Activated B cell treated with CpG ODN at 0.5 μM for 24 hours (primary cell): ENCODE measurements at regions of chr1 and their contacts with region 1.

Region 1: DNA sequence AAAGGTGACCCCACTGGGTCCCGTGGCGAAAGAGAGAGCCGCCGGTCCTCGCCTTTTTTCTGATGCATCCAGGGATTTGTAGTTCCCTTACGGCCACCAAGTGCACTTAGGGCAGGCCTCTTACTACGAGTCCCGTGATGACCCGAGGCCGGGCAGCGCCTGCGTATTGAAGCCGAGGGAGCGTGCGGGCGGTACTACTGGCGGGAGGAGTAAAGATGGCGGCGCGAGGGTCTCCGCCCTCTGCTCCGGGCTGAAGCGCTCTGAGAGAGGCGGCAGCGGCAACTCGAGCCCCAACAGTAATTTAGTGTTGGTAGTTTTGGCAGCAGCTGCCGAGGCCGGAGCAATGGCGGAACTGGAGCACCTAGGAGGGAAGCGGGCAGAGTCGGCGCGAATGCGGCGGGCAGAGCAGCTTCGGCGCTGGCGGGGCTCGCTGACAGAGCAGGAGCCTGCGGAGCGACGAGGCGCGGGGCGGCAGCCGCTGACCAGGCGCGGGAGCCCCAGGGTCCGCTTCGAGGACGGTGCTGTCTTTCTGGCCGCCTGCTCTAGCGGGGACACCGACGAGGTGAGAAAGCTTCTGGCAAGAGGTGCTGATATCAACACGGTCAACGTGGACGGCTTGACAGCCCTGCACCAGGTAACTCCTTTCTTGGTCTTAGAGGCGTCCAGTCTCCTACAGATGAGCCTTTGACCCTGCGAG is at the start of gene PPP1R12B:
- DNase-seq: peak; percentile 90
- ATAC-seq: peak; percentile 95
- H3K4me3 Mint-ChIP-seq: peak within 1 kb of the TSS; percentile 99
- H3K27ac Mint-ChIP-seq: peak within 1 kb of the TSS; percentile 93
- H3K4me1 Mint-ChIP-seq: peaks cover 25% of the 10 kb centered on the region
- H3K27me3 Mint-ChIP-seq: no peaks in the 10 kb centered on the region
- CTCF ChIP-seq: no peak
- total RNA-seq, gene PPP1R12B: 22.4 and 25.7 TPM in 2 replicates

Region 2: DNA sequence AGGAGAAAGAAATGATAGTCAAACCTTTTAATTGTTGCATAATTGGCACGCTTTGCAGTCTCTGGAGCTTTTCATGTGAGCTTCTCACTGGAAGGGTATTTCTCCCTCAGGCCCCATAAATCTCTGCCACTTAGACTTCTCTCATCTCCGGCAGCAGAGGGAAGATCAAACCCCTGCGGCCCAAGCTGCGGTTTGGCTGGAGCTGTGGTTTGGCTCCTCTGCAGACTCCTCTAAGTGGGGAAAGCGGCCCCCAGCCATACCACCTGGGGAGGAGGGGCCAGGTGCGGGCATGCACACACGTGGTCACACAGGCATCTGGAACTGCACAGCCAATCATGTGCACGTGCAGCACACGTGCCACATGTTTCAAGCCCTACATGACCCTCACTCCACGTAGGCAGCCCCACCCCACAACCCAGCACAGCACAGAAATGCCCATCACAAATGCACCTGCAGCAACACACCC is 65.2 kb before region 1 on chr1:
- CTCF ChIA-PET with region 1: no interaction called
- POLR2A ChIA-PET with region 1: no interaction called
- intact Hi-C with region 1: no loop called
- DNase-seq: no peak
- ATAC-seq: no peak
- H3K4me3 Mint-ChIP-seq: no peak overlapping the region
- H3K27ac Mint-ChIP-seq: no peak overlapping the region
- H3K4me1 Mint-ChIP-seq: no peaks in the 10 kb centered on the region
- H3K27me3 Mint-ChIP-seq: peaks cover 18% of the 10 kb centered on the region
- CTCF ChIP-seq: no peak

Region 3: GRCh38 chr1:202615501-202616354 is 267.1 kb after region 1 on chr1:
- CTCF ChIA-PET with region 1: no interaction called
- POLR2A ChIA-PET with region 1: no interaction called
- intact Hi-C with region 1: loop called (anchors 2 kb)
- DNase-seq: no peak
- ATAC-seq: peak; percentile 82
- H3K4me3 Mint-ChIP-seq: peak overlapping the region; percentile 77
- H3K27ac Mint-ChIP-seq: peak overlapping the region; percentile 64
- H3K4me1 Mint-ChIP-seq: peaks cover 50% of the 10 kb centered on the region
- H3K27me3 Mint-ChIP-seq: peaks cover 4% of the 10 kb centered on the region
- CTCF ChIP-seq: no peak

Region 4: GRCh38 chr1:202810615-202811295 is 462.1 kb after region 1 on chr1 and contains the start of gene PCAT6:
- CTCF ChIA-PET with region 1: no interaction called
- POLR2A ChIA-PET with region 1: no interaction called
- intact Hi-C with region 1: loop called (anchors 2 kb)
- DNase-seq: peak; percentile 88
- ATAC-seq: peak; percentile 82
- H3K4me3 Mint-ChIP-seq: peak within 1 kb of the TSS; percentile 93
- H3K27ac Mint-ChIP-seq: peak within 1 kb of the TSS; percentile 80
- H3K4me1 Mint-ChIP-seq: peaks cover 36% of the 10 kb centered on the region
- H3K27me3 Mint-ChIP-seq: no peaks in the 10 kb centered on the region
- CTCF ChIP-seq: no peak
- total RNA-seq, gene PCAT6: 0.67 and 0.83 TPM in 2 replicates

Region 5: DNA sequence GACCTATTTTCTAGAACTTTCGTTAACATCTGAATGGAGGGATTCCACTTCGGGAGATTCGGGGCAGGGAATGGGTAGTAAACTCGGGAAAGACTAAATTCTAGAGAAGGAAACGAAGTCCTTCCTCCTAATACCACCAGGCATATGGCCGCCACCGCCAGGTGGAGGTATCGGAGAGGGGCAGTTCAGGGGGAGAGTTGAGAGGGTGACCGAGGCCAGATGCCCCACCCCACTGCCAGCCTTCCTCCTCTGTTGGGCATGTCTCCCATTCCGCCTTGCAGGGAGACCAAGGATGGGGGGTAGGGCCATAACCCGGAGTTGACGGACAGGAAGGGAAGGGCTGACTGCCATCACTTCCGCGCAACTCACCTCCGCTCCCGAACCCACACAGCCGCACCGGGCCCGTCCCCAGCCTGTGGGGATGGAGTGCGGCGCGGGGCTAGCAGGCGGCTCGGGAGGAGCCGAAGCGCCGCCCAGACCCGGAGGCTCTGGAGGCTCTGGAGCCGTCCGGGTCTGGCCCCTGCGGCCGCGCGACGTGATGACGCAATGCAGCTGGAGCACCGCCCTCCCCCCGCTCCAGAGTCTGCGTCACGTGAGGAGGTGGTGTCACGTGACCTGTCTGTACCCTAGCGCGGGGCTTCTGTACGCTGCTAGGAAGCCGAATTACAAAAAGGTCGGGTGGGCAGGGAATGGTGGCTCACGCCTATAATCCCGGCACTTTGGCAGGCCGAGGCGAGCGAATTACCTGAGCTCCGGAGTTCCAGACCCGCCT is 578.2 kb after region 1 on chr1 and contains the start of gene KLHL12:
- CTCF ChIA-PET with region 1: no interaction called
- POLR2A ChIA-PET with region 1: no interaction called
- intact Hi-C with region 1: loop called (anchors 1 kb)
- DNase-seq: peak; percentile 92
- ATAC-seq: peak; percentile 93
- H3K4me3 Mint-ChIP-seq: peak within 1 kb of the TSS; percentile 94
- H3K27ac Mint-ChIP-seq: peak within 1 kb of the TSS; percentile 92
- H3K4me1 Mint-ChIP-seq: peaks cover 24% of the 10 kb centered on the region
- H3K27me3 Mint-ChIP-seq: no peaks in the 10 kb centered on the region
- CTCF ChIP-seq: no peak
- total RNA-seq, gene KLHL12: 30.4 and 30.8 TPM in 2 replicates

Region 6: DNA sequence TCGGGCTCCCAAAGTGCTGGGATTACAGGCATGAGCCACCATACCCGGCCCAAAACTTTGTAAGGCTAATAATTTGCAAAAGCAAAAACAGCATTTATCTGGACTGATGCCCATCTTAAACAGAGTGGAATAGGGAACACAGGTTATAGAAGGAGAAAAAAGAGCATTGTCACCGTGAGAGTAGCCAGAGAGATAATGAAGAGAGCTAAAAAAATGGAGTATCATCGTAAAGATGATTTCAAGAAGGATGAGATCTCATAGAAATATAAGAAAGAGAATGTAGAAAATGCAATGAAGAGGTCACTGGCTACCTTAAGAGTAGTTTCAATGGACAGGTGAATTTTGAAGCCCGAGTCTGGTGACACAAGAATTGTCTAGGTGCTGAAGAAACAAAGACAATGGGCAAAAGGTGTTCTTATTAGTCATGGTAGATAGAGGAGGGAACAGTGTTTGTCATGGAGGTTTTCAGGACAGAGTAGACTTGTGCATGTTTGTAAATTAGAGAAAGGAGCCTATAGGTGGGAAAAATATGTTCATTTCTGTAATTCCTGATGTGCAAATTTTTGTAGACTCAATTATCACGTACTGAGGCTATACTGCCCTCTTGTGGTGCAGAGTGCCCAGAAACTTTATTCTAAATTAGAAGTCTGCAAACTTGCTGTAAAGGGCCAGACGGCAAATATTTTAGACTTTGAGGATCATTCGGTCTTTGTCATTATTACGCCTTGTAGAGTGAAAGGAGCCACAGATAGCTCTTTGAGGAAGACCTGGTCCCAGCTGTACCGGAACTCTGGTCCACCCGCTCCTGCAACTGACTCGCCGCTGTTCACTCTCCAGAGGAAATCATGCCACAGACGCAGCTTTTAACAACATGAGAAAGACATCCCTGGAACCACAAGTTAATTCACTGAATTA is 650.4 kb after region 1 on chr1:
- CTCF ChIA-PET with region 1: no interaction called
- POLR2A ChIA-PET with region 1: no interaction called
- intact Hi-C with region 1: loop called (anchors 2 kb)
- DNase-seq: no peak
- ATAC-seq: peak; percentile 75
- H3K4me3 Mint-ChIP-seq: peak overlapping the region; percentile 74
- H3K27ac Mint-ChIP-seq: peak overlapping the region; percentile 81
- H3K4me1 Mint-ChIP-seq: peaks cover 18% of the 10 kb centered on the region
- H3K27me3 Mint-ChIP-seq: peaks cover 2% of the 10 kb centered on the region
- CTCF ChIP-seq: peak; percentile 56

Region 7: GRCh38 chr1:203861379-203862184 is 1512.9 kb after region 1 on chr1 and contains the start of gene SNRPE:
- CTCF ChIA-PET with region 1: no interaction called
- POLR2A ChIA-PET with region 1: no interaction called
- intact Hi-C with region 1: loop called (anchors 1 kb)
- DNase-seq: peak; percentile 92
- ATAC-seq: peak; percentile 98
- H3K4me3 Mint-ChIP-seq: peak within 1 kb of the TSS; percentile 97
- H3K27ac Mint-ChIP-seq: peak within 1 kb of the TSS; percentile 98
- H3K4me1 Mint-ChIP-seq: peaks cover 24% of the 10 kb centered on the region
- H3K27me3 Mint-ChIP-seq: no peaks in the 10 kb centered on the region
- CTCF ChIP-seq: no peak
- total RNA-seq, gene SNRPE: 149 and 156 TPM in 2 replicates